Mammary epithelial cell (primary cell): ENCODE measurements at regions of chr14 and their contacts with region 1.

Region 1: DNA sequence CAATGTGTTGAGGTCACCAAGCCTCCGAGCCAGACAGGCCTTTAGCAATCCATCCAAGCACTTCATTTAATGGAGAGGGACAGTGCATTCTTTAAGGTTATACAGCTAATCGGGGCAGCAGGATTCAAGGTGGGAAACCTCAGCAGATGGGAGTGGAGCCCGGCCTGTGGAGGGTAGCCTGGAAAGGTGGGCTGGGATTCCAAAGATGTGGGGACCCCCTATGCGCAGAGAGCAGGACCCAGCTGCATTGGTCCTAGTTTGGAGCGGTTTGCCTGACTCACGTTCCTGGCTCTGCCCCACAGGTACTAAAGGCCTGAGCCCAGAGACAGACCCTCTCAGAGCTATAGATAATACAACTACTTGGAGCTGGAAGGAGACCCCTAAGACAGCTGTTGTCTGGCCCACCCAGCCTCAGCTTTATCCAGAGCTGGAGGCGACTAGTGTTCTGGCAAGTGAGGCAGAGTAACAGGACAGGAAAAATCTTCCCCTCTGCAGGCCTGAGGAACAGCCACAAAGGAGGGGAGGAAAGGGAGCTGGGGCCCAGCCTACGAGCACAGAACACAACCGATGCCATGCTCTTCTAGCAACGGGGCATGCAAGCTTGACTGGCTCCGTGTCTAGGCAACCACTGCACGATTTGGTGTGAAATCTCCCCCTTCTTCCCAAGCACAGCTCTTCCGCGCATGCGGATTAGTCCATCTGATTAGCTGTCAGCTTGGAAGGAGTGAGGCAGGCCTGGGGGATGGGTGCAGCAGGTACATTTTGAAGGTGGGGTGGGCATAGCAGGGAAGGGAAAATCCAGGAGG is 1.1 kb upstream of the MYH7 start:
- DNase-seq: no peak
- H3K4me3 ChIP-seq: no peak overlapping the region
- H3K27ac ChIP-seq: no peak overlapping the region
- H3K4me1 ChIP-seq: no peaks in the 10 kb centered on the region
- H3K27me3 ChIP-seq: no peaks in the 10 kb centered on the region
- CTCF ChIP-seq: no peak

Region 2: GRCh38 chr14:23366426-23366921 is 70.1 kb before region 1 on chr14:
- CTCF ChIA-PET with region 1: no interaction called
- dilution Hi-C with region 1: loop called (anchors 5 kb)
- in situ Hi-C with region 1: no loop called
- intact Hi-C with region 1: no loop called
- DNase-seq: peak; percentile 60
- H3K4me3 ChIP-seq: peak overlapping the region in 2 of 3 experiments; percentile 12 to 34
- H3K27ac ChIP-seq: no peak overlapping the region
- H3K4me1 ChIP-seq: peaks cover 22% of the 10 kb centered on the region
- H3K27me3 ChIP-seq: peaks cover 7% of the 10 kb centered on the region
- CTCF ChIP-seq: no peak

Region 3: GRCh38 chr14:23399591-23399990 is 36.9 kb before region 1 on chr14:
- CTCF ChIA-PET with region 1: no interaction called
- dilution Hi-C with region 1: no loop called
- in situ Hi-C with region 1: no loop called
- intact Hi-C with region 1: no loop called
- DNase-seq: no peak
- H3K4me3 ChIP-seq: no peak overlapping the region
- H3K27ac ChIP-seq: no peak overlapping the region
- H3K4me1 ChIP-seq: no peaks in the 10 kb centered on the region
- H3K27me3 ChIP-seq: no peaks in the 10 kb centered on the region
- CTCF ChIP-seq: no peak

Region 4: DNA sequence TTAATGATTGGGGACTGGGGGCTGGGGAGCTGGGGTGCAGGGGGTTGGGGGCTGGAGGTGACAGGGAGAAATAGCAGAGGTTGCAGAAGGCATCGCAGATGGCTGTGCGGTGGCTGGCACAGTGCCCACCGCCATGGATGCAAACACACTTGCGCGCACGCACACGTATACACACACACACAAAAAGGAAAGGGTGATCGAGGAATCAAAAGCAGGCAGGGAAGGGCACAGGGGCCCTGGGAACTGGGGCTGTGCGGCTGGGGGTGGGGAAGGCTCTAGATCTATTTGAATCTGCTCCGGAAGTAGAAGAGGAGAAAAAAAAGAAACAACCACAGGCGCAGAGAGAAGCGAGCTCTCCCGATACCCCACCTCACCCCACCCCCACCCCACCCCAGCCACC is 75.6 kb after region 1 on chr14:
- CTCF ChIA-PET with region 1: no interaction called
- dilution Hi-C with region 1: loop called (anchors 5 kb)
- in situ Hi-C with region 1: no loop called
- intact Hi-C with region 1: no loop called
- DNase-seq: no peak
- H3K4me3 ChIP-seq: no peak overlapping the region
- H3K27ac ChIP-seq: no peak overlapping the region
- H3K4me1 ChIP-seq: no peaks in the 10 kb centered on the region
- H3K27me3 ChIP-seq: no peaks in the 10 kb centered on the region
- CTCF ChIP-seq: no peak

Region 5: DNA sequence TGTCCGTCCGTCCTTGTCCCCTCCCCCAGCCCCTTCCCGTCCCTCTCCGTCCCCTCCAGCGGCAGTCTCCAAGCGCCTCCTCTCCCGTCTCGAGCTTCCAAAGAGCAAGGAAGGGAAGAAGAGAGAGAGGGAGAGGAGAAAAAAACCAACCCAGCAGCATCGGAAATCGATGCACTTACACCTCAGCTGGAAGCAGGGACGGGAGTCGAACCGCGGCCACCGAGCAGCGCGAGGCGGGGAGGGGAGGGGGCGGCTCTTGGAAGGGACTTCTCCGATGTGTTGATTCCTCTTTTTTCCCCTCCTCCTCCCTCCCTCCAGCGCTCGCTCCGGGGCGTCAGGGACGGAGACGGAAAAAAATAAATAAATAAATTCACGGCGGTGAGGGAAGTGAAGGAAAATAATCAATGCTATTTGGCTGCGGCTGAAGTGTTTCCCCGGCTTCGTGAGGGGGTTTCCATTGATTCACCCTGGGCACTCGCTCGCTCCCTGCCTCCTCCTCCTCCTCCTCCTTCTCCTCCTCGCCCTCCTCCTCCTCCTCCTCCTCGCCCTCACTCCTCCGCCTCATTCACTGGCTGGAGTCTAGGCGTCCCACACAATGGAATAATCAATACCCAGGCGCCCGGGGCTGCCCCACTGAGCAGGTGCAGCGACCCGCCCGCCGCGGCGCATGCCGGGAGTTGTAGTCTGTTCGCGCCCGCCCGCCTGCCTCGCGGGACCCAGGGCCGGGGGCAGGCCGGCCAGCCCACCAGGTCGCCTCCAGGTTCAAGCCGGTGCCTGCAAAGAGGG is 114.8 kb after region 1 on chr14 and contains the start of gene ZFHX2:
- CTCF ChIA-PET with region 1: no interaction called
- dilution Hi-C with region 1: no loop called
- in situ Hi-C with region 1: no loop called
- intact Hi-C with region 1: no loop called
- DNase-seq: peak; percentile 54
- H3K4me3 ChIP-seq: peak within 1 kb of the TSS; percentile 62 to 73 (median 67)
- H3K27ac ChIP-seq: no peak within 1 kb of the TSS
- H3K4me1 ChIP-seq: peaks cover 8% of the 10 kb centered on the region
- H3K27me3 ChIP-seq: no peaks in the 10 kb centered on the region
- CTCF ChIP-seq: no peak
- total RNA-seq, gene ZFHX2: 0.17 to 1.7 TPM

Region 6: GRCh38 chr14:23793532-23793931 is 357.0 kb after region 1 on chr14:
- CTCF ChIA-PET with region 1: no interaction called
- dilution Hi-C with region 1: no loop called
- in situ Hi-C with region 1: no loop called
- intact Hi-C with region 1: no loop called
- DNase-seq: no peak
- H3K4me3 ChIP-seq: no peak overlapping the region
- H3K27ac ChIP-seq: no peak overlapping the region
- H3K4me1 ChIP-seq: no peaks in the 10 kb centered on the region
- H3K27me3 ChIP-seq: no peaks in the 10 kb centered on the region
- CTCF ChIP-seq: no peak